Heart right ventricle (tissue), 16 donors: ENCODE measurements at regions of chr1 and their contacts with region 1.

Region 1: DNA sequence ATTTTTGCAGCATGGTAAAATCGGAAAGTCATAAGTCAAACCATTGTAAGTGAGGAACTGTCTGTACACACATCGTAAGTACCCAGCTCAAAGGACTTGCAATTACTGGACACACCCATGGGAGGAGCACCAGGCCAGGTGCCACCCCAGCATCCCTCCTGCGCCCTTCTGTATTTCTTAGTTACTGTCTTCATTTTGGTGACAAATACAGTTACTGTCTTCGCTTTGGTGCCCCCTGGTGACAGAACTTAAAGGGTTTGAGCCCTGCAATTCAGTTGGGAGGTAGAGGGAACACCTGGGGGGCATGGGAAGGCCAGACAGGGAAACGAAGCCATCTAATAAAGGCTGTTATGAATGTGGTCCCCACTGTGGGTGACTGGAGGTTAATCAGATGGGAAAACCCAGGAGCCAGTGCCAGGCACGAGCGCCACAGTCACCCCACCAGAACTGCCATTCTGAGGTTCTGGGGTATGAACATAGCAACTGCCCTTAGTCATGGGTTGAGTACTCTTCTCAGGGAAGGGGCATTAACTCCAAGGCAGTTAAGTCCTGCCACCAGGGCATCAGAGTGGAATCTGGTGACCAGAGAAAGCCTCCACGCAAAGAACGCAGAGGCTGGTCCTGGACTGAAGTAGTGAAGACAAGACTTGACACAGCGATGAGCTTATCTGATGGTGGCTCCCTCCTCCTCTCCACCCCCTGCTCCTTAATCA is 612.9 kb downstream of the PTPRU start:
- DNase-seq: no peak
- ATAC-seq: no peak
- H3K4me3 ChIP-seq: no peak overlapping the region
- H3K27ac ChIP-seq: no peak overlapping the region
- H3K4me1 ChIP-seq: peaks cover 0 to 15% (median 0%) of the 10 kb centered on the region in 9 donors
- H3K27me3 ChIP-seq: peaks cover 0 to 68% (median 38%) of the 10 kb centered on the region in 7 donors
- CTCF ChIP-seq: peak in 8 of 9 donors; percentile 13 to 58 (median 45)

Region 2: DNA sequence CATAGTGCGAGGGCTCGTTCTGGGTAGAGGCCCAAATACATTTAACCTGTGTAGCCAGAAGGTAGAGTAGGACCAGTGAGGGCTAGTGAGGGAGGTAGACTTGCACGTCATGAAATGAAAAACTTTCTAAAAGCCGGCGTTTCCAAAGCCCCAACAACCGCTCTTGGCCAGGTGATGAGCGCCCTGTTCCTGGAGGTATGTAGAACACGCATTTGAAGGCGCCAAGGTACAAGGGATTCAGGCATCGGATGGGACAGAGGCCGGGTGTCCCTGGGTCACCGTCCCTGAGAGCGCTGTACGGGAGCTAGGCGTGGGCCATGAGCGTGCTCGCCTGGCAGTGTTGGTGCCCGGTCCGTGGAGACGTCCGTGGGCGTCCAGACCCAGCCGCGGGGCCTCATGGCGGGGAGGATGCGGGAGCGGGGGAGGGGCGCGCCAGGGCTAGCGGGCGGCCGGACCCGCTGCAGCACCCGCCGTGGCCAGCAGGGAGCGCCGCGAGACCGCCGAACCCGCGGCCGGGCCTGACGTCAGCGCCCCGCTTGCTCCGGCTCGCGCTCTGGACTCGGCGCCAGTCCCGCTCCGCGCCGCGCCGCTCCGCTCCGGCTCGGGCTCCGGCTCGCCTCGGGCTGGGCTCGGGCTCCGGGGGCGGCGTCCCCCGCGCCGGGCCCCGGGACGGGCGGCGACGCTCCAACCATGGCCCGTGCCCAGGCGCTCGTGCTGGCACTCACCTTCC is 613.1 kb before region 1 on chr1 and contains the start of gene PTPRU:
- intact Hi-C with region 1: loop called in 5 of 10 experiments (anchors 2 to 10 kb)
- DNase-seq: peak; percentile 72 to 83
- ATAC-seq: peak; percentile 69 to 89 (median 80)
- H3K4me3 ChIP-seq: peak within 1 kb of the TSS; percentile 52 to 82 (median 66)
- H3K27ac ChIP-seq: peak within 1 kb of the TSS in 8 of 10 donors; percentile 13 to 73 (median 54)
- H3K4me1 ChIP-seq: peaks cover 5 to 30% (median 21%) of the 10 kb centered on the region in 9 donors
- H3K27me3 ChIP-seq: peaks cover 0 to 51% (median 0%) of the 10 kb centered on the region in 7 donors
- CTCF ChIP-seq: peak; percentile 63 to 99 (median 82)
- total RNA-seq, gene PTPRU: 8.6 to 29.8 (median 14.5) TPM